ENCODE measurements at regions of chr5 and their contacts with region 1.

Region 1: DNA sequence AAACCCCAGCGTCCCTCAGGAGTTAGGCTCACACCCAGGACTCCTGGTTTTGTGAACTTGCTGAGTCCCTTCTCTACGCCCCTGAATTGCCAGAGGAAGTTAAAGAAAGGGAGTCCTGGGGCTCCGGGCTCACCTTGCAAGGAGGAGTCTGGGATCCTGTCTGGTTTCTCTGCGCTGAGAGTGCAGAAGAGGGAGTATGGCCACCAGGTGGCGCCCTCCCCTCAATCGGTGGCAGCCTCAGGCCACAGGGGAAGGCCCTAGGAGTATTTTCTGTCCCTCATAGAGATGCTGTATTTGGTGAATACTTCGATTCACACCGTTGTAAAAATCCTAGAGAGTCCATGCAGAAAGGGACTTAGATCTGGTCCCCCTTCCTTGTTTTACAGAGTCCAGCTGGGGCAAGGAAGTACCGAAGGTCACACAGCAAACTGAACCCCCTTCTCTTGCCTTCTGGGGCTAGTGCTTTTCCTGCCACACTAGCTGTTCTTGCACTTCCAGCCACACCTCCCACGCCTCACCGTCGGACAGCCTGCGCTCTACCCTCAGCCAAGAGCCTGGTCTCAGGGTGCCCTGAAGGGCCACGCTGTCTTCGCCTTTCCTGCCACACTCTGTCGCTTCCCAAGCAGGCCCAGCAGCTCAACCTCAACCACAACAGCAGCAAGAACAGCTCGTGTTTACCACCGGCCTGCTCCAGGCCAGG is 10.2 kb downstream of the HAND1 start:
- DNase-seq: peak; percentile 77
- H3K4me3 Mint-ChIP-seq: no peak overlapping the region
- H3K27ac Mint-ChIP-seq: no peak overlapping the region
- H3K4me1 Mint-ChIP-seq: no peaks in the 10 kb centered on the region
- H3K27me3 Mint-ChIP-seq: peaks cover 35% of the 10 kb centered on the region

Region 2: GRCh38 chr5:154482528-154483449 is 15.0 kb after region 1 on chr5:
- CTCF ChIA-PET with region 1: interaction called, 11 read pairs
- POLR2A ChIA-PET with region 1: interaction called, 3 read pairs
- DNase-seq: no peak
- H3K4me3 Mint-ChIP-seq: no peak overlapping the region
- H3K27ac Mint-ChIP-seq: no peak overlapping the region
- H3K4me1 Mint-ChIP-seq: peaks cover 8% of the 10 kb centered on the region
- H3K27me3 Mint-ChIP-seq: peaks cover 94% of the 10 kb centered on the region

Measured in activated CD4-positive, alpha-beta memory T cell treated with anti-CD3 and anti-CD28 coated beads, Interleukin-2, amount 10 ng/mL, durations not matched to agents 7 days and 5 days (primary cell).